Activated CD8-positive, alpha-beta T cell treated with anti-CD3 and anti-CD28 coated beads for 36 hours (primary cell): ENCODE measurements at regions of chr13 and their contacts with region 1.

Region 1: GRCh38 chr13:98454389-98454881 is 122.5 kb downstream of the STK24 start:
- DNase-seq: no peak
- ATAC-seq: no peak
- H3K4me3 Mint-ChIP-seq: no peak overlapping the region
- H3K27ac Mint-ChIP-seq: peak overlapping the region; percentile 41
- H3K4me1 Mint-ChIP-seq: peaks cover 23% of the 10 kb centered on the region
- H3K27me3 Mint-ChIP-seq: no peaks in the 10 kb centered on the region
- CTCF ChIP-seq: no peak

Region 2: DNA sequence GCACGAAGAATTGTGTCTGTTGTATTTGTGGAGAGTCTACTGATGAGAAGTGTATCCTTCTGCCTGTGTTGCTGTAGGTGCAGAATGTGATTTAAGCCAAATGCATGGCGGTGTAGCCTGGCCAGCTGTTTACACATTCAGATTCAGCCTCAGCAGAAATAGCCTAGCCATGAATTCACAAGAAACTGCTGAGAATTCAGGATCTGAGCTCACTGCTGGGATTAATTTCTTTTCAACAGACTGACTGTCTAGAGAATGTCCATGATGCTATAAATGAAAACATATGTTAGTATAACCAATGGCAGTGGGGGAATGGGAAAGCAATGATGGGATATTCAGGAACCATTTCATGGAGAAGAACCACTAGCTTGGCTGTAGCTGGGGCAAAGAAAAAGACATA is 199.9 kb before region 1 on chr13:
- CTCF ChIA-PET with region 1: no interaction called
- POLR2A ChIA-PET with region 1: no interaction called
- intact Hi-C with region 1: no loop called
- DNase-seq: no peak
- ATAC-seq: no peak
- H3K4me3 Mint-ChIP-seq: no peak overlapping the region
- H3K27ac Mint-ChIP-seq: no peak overlapping the region
- H3K4me1 Mint-ChIP-seq: no peaks in the 10 kb centered on the region
- H3K27me3 Mint-ChIP-seq: peaks cover 2% of the 10 kb centered on the region
- CTCF ChIP-seq: no peak

Region 3: GRCh38 chr13:98466634-98467236 is 12.3 kb after region 1 on chr13:
- CTCF ChIA-PET with region 1: interaction called, 18 read pairs
- POLR2A ChIA-PET with region 1: interaction called, 3 read pairs
- intact Hi-C with region 1: no loop called
- DNase-seq: peak; percentile 80
- ATAC-seq: peak; percentile 96
- H3K4me3 Mint-ChIP-seq: no peak overlapping the region
- H3K27ac Mint-ChIP-seq: peak overlapping the region; percentile 56
- H3K4me1 Mint-ChIP-seq: peaks cover 34% of the 10 kb centered on the region
- H3K27me3 Mint-ChIP-seq: no peaks in the 10 kb centered on the region
- CTCF ChIP-seq: peak; percentile 48

Region 4: GRCh38 chr13:98492335-98493041 is 38.1 kb after region 1 on chr13:
- CTCF ChIA-PET with region 1: no interaction called
- POLR2A ChIA-PET with region 1: no interaction called
- intact Hi-C with region 1: no loop called
- DNase-seq: no peak
- ATAC-seq: no peak
- H3K4me3 Mint-ChIP-seq: no peak overlapping the region
- H3K27ac Mint-ChIP-seq: no peak overlapping the region
- H3K4me1 Mint-ChIP-seq: peaks cover 67% of the 10 kb centered on the region
- H3K27me3 Mint-ChIP-seq: no peaks in the 10 kb centered on the region
- CTCF ChIP-seq: no peak